CD4-positive, alpha-beta memory T cell (primary cell): ENCODE measurements at regions of chr11 and their contacts with region 1.

Region 1: DNA sequence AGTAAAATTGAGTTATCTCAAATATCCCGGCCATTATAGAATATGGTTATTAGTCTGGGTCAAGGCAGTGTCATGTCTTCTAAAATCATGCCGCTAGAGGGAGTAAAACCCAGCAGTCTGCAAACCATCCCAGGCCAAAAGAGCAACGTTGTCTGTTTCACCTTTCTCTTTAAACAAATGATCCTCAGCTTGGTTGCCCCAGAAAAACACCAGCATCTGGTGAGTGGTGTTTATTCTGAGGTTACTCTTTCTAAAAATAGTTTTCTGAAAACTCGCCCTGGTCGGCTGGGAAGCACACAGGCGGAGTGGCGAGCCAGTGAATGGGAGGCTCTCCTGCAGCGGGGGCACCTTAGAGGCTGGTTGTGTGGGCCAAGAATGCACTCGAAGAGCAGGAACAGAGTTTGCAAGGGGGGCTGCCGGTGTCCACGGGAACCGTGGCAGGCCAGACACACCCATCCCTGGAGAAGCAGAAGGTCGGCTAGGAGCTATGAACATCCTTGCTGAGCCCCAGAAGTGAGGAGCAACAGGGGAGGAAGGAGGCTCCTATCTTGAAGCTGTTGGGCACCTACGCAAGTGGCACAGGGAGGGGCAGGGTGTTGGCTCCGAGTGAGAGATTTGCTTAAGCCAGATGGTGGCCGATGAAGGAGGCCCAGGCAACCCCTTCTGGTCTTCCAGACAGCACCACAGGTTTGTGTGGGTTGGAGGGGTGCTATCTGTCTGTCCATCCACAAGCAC is 297.1 kb downstream of the ETS1 start:
- DNase-seq: peak; percentile 84 to 89 (median 86)
- H3K4me3 ChIP-seq: peak overlapping the region; percentile 68
- H3K4me3 Mint-ChIP-seq: peak overlapping the region; percentile 87 to 95 (median 94)
- H3K27ac ChIP-seq: peak overlapping the region; percentile 90
- H3K27ac Mint-ChIP-seq: peak overlapping the region; percentile 98 to 100 (median 99)
- H3K4me1 ChIP-seq: peaks cover 89% of the 10 kb centered on the region
- H3K4me1 Mint-ChIP-seq: peaks cover 70 to 100% (median 84%) of the 10 kb centered on the region in 4 donors
- H3K27me3 ChIP-seq: no peaks in the 10 kb centered on the region
- H3K27me3 Mint-ChIP-seq: no peaks in the 10 kb centered on the region

Region 2: GRCh38 chr11:128195057-128195751 is 95.1 kb before region 1 on chr11:
- CTCF ChIA-PET with region 1: no interaction called
- POLR2A ChIA-PET with region 1: interaction called, 4 read pairs
- intact Hi-C with region 1: loop called (anchors 1 kb)
- DNase-seq: peak; percentile 66 to 78 (median 76)
- H3K4me3 ChIP-seq: no peak overlapping the region
- H3K4me3 Mint-ChIP-seq: peak overlapping the region; percentile 1 to 67 (median 48)
- H3K27ac ChIP-seq: no peak overlapping the region
- H3K27ac Mint-ChIP-seq: peak overlapping the region; percentile 12 to 93 (median 63)
- H3K4me1 ChIP-seq: peaks cover 18% of the 10 kb centered on the region
- H3K4me1 Mint-ChIP-seq: peaks cover 20 to 38% (median 27%) of the 10 kb centered on the region in 4 donors
- H3K27me3 ChIP-seq: no peaks in the 10 kb centered on the region
- H3K27me3 Mint-ChIP-seq: no peaks in the 10 kb centered on the region

Region 3: DNA sequence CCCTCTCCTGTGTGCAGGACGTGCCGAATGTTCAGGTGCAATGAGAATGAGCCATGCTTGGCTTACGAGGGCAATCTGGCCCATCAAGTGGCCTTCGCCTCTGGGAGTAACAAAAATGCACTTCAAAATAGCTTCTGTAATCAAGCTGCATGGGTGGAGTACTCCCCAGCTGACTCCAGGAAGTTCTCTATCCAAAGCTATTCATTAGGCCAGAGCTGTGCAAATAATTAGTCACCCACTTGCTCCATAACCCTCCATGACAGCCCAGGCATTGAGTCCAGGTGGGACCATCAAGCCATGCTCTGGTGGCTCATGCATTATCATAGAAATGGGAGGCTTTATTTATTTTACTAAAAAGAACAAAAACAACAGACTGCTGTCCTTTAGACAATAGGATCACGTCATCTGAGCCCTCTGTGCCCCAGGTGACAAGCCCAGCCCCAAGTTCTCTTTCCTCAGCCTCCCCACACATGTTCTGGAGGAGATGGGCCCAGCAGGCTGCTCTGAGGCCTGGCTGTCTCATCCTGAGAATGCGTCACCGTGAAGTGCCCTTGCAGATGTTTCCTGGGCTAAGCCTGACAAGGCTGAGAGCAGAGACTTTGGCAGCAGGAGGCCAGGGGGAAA is 52.4 kb after region 1 on chr11:
- CTCF ChIA-PET with region 1: interaction called, 8 read pairs
- POLR2A ChIA-PET with region 1: interaction called, 55 read pairs
- intact Hi-C with region 1: loop called (anchors 2 kb)
- DNase-seq: peak; percentile 61 to 92 (median 66)
- H3K4me3 ChIP-seq: peak overlapping the region in 1 of 2 donors; percentile 25
- H3K4me3 Mint-ChIP-seq: peak overlapping the region in 7 of 8 donors; percentile 64 to 90 (median 83)
- H3K27ac ChIP-seq: peak overlapping the region; percentile 85
- H3K27ac Mint-ChIP-seq: peak overlapping the region; percentile 96 to 100 (median 99)
- H3K4me1 ChIP-seq: peaks cover 87% of the 10 kb centered on the region
- H3K4me1 Mint-ChIP-seq: peaks cover 70 to 99% (median 86%) of the 10 kb centered on the region in 4 donors
- H3K27me3 ChIP-seq: no peaks in the 10 kb centered on the region
- H3K27me3 Mint-ChIP-seq: no peaks in the 10 kb centered on the region

Region 4: DNA sequence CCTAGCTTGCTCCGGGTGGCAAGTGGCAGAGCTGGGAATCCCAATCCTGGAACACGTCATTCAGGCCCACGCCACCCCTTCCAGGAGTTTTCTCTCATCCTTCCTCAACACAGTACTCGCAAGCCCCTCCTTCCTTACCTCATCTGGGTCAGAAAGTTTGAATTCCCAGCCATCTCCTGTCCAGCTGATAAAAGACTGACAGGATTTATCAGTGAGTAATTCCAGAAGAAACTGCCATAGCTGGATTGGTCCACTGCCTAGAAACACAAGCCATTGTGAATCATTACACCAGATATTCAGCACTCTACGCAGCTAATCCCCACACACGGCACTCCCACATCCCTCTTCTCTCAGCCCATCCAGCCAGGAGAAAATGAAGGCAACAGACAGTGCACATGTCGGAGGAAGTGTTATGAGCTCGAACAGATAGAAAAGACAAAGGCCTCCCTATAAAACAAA is 173.1 kb after region 1 on chr11:
- CTCF ChIA-PET with region 1: interaction called, 8 read pairs
- POLR2A ChIA-PET with region 1: interaction called, 651 read pairs
- intact Hi-C with region 1: loop called (anchors 1 kb)
- DNase-seq: no peak
- H3K4me3 ChIP-seq: peak overlapping the region in 1 of 2 donors; percentile 3
- H3K4me3 Mint-ChIP-seq: peak overlapping the region; percentile 26 to 93 (median 78)
- H3K27ac ChIP-seq: peak overlapping the region; percentile 94
- H3K27ac Mint-ChIP-seq: peak overlapping the region; percentile 98 to 99 (median 99)
- H3K4me1 ChIP-seq: peaks cover 93% of the 10 kb centered on the region
- H3K4me1 Mint-ChIP-seq: peaks cover 76 to 95% (median 86%) of the 10 kb centered on the region in 4 donors
- H3K27me3 ChIP-seq: no peaks in the 10 kb centered on the region
- H3K27me3 Mint-ChIP-seq: no peaks in the 10 kb centered on the region

Region 5: GRCh38 chr11:128488471-128488870 is 198.2 kb after region 1 on chr11:
- CTCF ChIA-PET with region 1: interaction called, 12 read pairs
- POLR2A ChIA-PET with region 1: interaction called, 17 read pairs
- intact Hi-C with region 1: no loop called
- DNase-seq: peak in 1 of 5 donors; percentile 85
- H3K4me3 ChIP-seq: peak overlapping the region in 1 of 2 donors; percentile 11
- H3K4me3 Mint-ChIP-seq: peak overlapping the region; percentile 10 to 81 (median 68)
- H3K27ac ChIP-seq: peak overlapping the region; percentile 89
- H3K27ac Mint-ChIP-seq: peak overlapping the region; percentile 90 to 99 (median 97)
- H3K4me1 ChIP-seq: peaks cover 99% of the 10 kb centered on the region
- H3K4me1 Mint-ChIP-seq: peaks cover 92 to 99% (median 95%) of the 10 kb centered on the region in 4 donors
- H3K27me3 ChIP-seq: no peaks in the 10 kb centered on the region
- H3K27me3 Mint-ChIP-seq: no peaks in the 10 kb centered on the region

Region 6: GRCh38 chr11:128757235-128757711 is 467.0 kb after region 1 on chr11:
- CTCF ChIA-PET with region 1: interaction called, 3 read pairs
- POLR2A ChIA-PET with region 1: interaction called, 7 read pairs
- intact Hi-C with region 1: loop called (anchors 1 kb)
- DNase-seq: peak; percentile 64 to 85 (median 72)
- H3K4me3 ChIP-seq: no peak overlapping the region
- H3K4me3 Mint-ChIP-seq: peak overlapping the region in 6 of 8 donors; percentile 8 to 82 (median 54)
- H3K27ac ChIP-seq: peak overlapping the region; percentile 34
- H3K27ac Mint-ChIP-seq: peak overlapping the region; percentile 77 to 96 (median 94)
- H3K4me1 ChIP-seq: peaks cover 70% of the 10 kb centered on the region
- H3K4me1 Mint-ChIP-seq: peaks cover 59 to 87% (median 76%) of the 10 kb centered on the region in 4 donors
- H3K27me3 ChIP-seq: no peaks in the 10 kb centered on the region
- H3K27me3 Mint-ChIP-seq: no peaks in the 10 kb centered on the region